Activated naive CD4-positive, alpha-beta T cell treated with anti-CD3 and anti-CD28 coated beads, Interleukin-2, amount 10 ng/mL, durations not matched to agents 7 days and 5 days (primary cell): ENCODE measurements at regions of chr9 and their contacts with region 1.

Region 1: DNA sequence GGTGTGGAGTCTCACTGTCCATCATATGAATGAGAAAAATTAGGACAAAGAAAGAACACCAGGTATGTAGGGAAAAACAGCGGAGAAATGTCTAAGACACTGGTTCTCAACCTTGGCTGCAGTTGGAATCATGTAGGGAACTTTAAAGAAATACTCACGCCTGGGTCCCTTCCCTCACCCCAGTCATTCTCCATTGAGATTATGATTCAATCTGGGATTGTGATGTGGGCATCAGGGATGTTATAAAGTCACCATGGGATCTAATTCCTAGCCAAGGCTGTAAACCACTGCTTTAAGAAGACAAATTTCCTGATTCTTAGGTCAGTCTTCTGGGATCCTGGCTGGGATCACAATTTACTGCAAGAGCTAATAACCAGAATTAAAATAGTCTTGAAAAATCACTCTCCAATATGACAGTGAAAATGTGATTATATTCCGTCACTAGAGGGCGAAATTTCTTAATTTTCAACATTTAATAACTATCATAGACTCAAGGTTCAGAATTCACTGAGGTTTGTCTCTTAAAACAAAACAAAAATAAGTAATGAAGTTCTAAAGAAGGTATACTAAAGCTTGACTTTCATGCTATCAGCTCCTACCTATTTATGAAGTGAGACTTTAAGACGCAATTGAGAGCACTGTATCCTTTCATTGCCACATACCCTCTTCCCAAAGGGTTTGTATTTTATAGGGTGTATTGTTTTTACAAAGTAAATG is 60.5 kb downstream of the GLDC start:
- DNase-seq: no peak
- H3K4me3 Mint-ChIP-seq: no peak overlapping the region
- H3K27ac Mint-ChIP-seq: no peak overlapping the region
- H3K4me1 Mint-ChIP-seq: no peaks in the 10 kb centered on the region
- H3K27me3 Mint-ChIP-seq: peaks cover 7% of the 10 kb centered on the region

Region 2: GRCh38 chr9:6739218-6739617 is 154.2 kb after region 1 on chr9:
- CTCF ChIA-PET with region 1: interaction called, 10 read pairs
- DNase-seq: no peak
- H3K4me3 Mint-ChIP-seq: no peak overlapping the region
- H3K27ac Mint-ChIP-seq: no peak overlapping the region
- H3K4me1 Mint-ChIP-seq: no peaks in the 10 kb centered on the region
- H3K27me3 Mint-ChIP-seq: no peaks in the 10 kb centered on the region